Dendritic cell treated with granulocyte-macrophage colony-stimulating factor and Interleukin-4, amounts not matched to agents 40 ng/mL and 50 ng/mL, for 4 days (primary cell): ENCODE measurements at regions of chr7 and their contacts with region 1.

Region 1: DNA sequence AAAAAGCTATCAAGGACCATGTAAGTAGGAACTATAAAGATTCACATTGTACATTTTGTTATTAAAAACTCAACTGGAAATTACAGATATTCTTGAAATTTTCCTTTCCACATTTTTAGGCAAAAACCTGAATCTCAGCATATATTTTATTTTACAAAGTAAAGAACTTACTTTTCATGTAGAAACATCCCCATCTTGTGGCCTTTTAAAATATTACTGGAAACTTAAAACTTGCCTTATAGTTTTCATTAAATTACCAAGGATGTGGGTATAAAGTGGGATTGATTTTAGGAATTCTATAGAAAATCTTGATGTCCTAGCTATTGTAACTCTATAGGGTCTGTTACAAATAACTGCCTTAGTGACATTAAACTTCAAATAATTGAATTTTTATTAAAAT is 10.6 kb downstream of the DBF4 start:
- H3K4me3 Mint-ChIP-seq: no peak overlapping the region
- H3K27ac Mint-ChIP-seq: no peak overlapping the region
- H3K4me1 Mint-ChIP-seq: no peaks in the 10 kb centered on the region
- H3K27me3 Mint-ChIP-seq: no peaks in the 10 kb centered on the region

Region 2: GRCh38 chr7:87416682-87417587 is 469.9 kb before region 1 on chr7:
- intact Hi-C with region 1: loop called (anchors 10 kb)
- H3K4me3 Mint-ChIP-seq: no peak overlapping the region
- H3K27ac Mint-ChIP-seq: no peak overlapping the region
- H3K4me1 Mint-ChIP-seq: no peaks in the 10 kb centered on the region
- H3K27me3 Mint-ChIP-seq: no peaks in the 10 kb centered on the region

Region 3: DNA sequence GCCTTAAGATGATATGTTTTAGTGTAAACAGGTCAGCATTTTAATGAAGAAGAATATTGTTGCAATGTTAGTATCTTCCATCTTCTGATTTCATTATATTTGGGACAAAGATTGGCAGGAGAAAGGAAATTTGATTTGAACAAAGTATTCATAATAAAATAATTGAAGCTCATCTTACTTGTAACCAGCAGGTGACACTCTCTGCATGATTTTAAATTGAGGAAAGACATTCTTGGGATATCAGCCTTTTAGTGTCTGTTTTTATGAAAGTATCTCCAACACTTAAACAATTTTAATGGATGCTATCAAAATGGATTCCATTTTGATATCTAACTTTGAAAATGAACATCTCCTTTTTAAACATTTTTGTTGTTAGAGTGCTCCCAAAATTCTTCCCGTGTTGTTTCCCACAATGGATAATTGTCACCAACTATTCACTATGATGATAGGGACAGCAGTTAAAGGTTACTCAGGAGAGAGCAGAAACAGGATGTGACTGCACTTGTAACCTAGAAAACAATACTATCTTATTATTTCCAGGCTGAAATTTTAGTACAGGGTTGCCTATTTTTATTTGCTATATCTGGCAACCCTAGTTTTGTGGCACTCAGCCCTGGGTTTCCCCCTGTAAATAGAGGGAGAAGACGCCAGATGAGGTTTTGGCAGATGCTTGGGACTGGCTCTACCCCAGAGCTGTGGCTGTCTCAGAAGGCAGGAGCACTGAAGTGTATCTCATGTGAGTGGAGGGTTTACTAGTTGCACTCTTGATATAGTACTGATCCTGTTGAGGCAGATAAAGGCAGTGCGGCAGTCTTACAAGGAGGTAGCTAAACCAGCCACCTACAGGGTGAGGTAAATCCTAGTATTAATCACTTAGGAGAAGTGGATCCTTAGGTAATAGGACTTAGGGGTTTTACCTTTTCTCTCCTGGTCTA is 380.4 kb before region 1 on chr7:
- intact Hi-C with region 1: loop called (anchors 5 kb)
- H3K4me3 Mint-ChIP-seq: no peak overlapping the region
- H3K27ac Mint-ChIP-seq: no peak overlapping the region
- H3K4me1 Mint-ChIP-seq: peaks cover 5% of the 10 kb centered on the region
- H3K27me3 Mint-ChIP-seq: no peaks in the 10 kb centered on the region

Region 4: GRCh38 chr7:87797798-87798403 is 89.0 kb before region 1 on chr7:
- intact Hi-C with region 1: loop called (anchors 1 kb)
- H3K4me3 Mint-ChIP-seq: no peak overlapping the region
- H3K27ac Mint-ChIP-seq: no peak overlapping the region
- H3K4me1 Mint-ChIP-seq: no peaks in the 10 kb centered on the region
- H3K27me3 Mint-ChIP-seq: no peaks in the 10 kb centered on the region

Region 5: GRCh38 chr7:87833130-87833529 is 53.7 kb before region 1 on chr7:
- intact Hi-C with region 1: no loop called
- H3K4me3 Mint-ChIP-seq: no peak overlapping the region
- H3K27ac Mint-ChIP-seq: no peak overlapping the region
- H3K4me1 Mint-ChIP-seq: no peaks in the 10 kb centered on the region
- H3K27me3 Mint-ChIP-seq: no peaks in the 10 kb centered on the region

Region 6: DNA sequence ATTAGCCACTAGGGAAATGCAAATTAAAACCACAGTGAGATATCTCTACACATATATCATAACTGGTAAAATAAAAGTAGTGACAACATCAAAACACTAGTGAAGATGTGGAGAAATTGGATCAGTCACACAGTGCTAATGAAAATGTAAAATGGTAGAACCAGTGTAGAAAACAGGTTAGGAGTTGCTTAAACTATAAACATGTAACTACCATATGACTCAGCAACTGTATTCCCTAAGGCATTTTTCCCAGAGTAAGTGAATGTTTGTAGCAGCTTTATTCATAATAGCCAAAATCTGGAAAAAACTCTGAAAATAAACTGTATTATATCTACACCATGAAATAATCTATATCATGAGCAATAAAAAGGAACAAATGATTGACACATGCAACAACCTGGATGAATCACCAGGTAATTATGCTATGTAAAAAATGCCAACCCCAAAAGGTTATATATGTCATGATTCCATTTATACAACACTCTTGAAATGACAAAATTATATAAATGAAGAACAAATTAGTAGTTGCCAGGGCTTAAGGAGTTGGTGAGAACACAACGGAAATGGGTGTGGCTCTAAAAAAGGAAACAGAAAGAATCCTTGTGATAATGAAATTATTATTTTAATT is 33.5 kb before region 1 on chr7:
- intact Hi-C with region 1: loop called (anchors 5 kb)
- H3K4me3 Mint-ChIP-seq: no peak overlapping the region
- H3K27ac Mint-ChIP-seq: no peak overlapping the region
- H3K4me1 Mint-ChIP-seq: peaks cover 37% of the 10 kb centered on the region
- H3K27me3 Mint-ChIP-seq: no peaks in the 10 kb centered on the region